ENCODE measurements at regions of chr14 and their contacts with region 1.

Region 1: GRCh38 chr14:76710056-76711010 is 50.9 kb upstream of the VASH1 start:
- DNase-seq: peak in 1 of 2 donors; percentile 54
- ATAC-seq: peak in 7 of 8 donors; percentile 43 to 69 (median 52)
- H3K4me3 ChIP-seq: no peak overlapping the region
- H3K27ac ChIP-seq: peak overlapping the region in 2 of 10 donors; percentile 15 to 20
- H3K4me1 ChIP-seq: peaks cover 0 to 26% (median 19%) of the 10 kb centered on the region in 9 donors
- H3K27me3 ChIP-seq: no peaks in the 10 kb centered on the region
- CTCF ChIP-seq: peak; percentile 70 to 83 (median 79)

Region 2: DNA sequence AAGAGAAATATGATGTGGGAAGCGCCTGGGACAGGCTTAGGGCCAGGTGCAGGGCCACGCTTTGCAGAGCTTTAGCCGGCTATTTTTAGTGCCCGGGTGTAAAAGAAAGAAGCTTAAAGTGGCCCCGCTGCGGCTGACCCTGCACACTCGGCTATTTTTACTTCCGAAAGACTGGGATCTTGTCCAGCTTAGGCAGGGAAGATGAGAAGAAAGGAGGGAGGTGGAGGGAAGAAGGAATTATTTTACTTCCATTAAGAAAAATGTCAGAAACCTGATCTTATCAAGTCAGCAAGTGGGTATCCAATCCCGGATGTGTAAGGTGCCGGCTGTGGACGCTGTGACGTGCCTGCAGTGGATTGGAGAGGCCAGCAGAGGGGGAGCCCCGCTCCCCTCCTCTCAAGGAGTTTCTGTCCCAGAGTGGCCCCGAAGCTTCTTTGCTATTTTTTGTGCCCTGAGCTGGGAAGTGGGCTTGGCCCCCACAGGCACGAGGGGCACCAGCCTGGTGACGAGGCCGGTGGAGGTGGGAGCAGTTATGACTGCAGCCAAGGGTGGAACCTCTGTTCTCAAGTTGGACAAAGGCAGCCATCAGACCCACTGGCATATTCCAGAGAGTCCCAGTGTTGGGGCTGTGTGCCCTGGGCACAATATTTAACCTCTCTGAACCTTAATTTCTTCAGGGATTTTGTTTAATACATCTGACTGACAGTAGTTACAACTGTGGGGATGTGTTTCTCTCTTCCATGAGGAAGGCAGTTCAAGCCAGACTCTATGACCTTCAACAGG is 236.7 kb before region 1 on chr14:
- intact Hi-C with region 1: no loop called
- DNase-seq: peak; percentile 47 to 55
- ATAC-seq: peak; percentile 81 to 98 (median 92)
- H3K4me3 ChIP-seq: peak overlapping the region in 8 of 10 donors; percentile 14 to 49 (median 38)
- H3K27ac ChIP-seq: peak overlapping the region in 7 of 10 donors; percentile 14 to 75 (median 55)
- H3K4me1 ChIP-seq: peaks cover 0 to 24% (median 16%) of the 10 kb centered on the region in 9 donors
- H3K27me3 ChIP-seq: no peaks in the 10 kb centered on the region
- CTCF ChIP-seq: peak in 8 of 9 donors; percentile 11 to 50 (median 25)

Region 3: DNA sequence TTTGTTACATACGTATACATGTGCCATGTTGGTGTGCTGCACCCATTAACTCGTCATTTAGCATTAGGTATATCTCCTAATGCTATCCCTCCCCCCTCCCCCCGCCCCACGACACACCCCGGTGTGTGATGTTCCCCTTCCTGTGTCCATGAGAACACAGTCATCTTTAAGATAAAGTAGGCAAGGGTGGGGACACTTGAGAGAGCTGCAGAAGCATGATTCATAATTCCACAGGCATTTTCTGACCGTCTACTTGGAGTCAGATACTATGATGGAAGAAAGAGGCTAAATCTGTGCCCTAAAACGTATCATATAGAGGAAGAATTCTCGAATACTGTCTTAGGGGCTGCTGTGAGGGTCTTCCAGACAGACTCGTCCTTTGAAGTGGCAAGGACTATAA is 95.0 kb before region 1 on chr14:
- intact Hi-C with region 1: no loop called
- DNase-seq: no peak
- ATAC-seq: no peak
- H3K4me3 ChIP-seq: no peak overlapping the region
- H3K27ac ChIP-seq: no peak overlapping the region
- H3K4me1 ChIP-seq: no peaks in the 10 kb centered on the region
- H3K27me3 ChIP-seq: peaks cover 0 to 11% (median 0%) of the 10 kb centered on the region in 7 donors
- CTCF ChIP-seq: no peak

Region 4: DNA sequence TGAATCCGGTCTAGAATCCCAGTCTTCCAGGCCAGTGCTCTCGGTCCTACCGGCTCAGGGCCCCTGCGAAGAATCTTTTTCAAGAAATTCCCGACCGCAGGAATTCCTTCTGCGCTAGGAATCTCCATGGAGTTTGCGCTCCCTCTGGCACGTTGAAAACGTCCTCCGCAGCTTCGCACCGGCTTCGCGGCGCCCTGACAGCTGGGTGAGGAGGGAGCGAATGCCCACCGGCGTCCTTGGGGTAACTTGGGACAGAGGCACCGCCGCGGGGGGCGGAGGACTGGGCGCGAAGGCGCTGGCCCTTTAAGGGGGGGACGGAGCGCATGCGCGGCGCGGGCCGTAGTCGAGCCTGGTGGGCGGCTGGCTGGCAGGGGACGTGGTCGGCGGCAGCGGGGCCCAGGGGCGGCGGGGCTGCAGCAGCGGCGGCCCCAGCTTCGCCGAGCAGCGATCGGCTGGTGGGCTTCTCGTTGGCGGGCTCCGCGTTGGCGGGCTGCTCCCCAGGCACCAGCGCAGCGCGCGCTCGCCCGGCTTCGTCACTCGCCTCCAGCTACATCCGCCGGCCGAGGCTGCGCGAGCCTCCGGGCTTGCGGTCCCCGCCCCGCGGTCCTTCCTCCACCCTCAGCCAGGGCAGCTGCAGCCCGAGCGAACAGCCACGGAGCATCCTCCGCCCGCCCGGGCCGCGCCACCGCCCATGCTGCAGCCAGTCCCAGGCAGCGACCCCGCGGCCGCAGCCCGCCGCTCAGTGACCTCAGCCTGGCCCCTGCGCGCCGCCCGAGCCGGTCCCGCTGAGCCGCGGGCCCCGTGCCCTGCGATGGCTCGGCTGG is 51.0 kb after region 1 on chr14 and contains the start of gene VASH1:
- intact Hi-C with region 1: loop called in 5 of 10 experiments (anchors 5 kb)
- DNase-seq: peak; percentile 74 to 85
- ATAC-seq: peak; percentile 71 to 90 (median 77)
- H3K4me3 ChIP-seq: peak within 1 kb of the TSS; percentile 69 to 93 (median 87)
- H3K27ac ChIP-seq: peak within 1 kb of the TSS; percentile 68 to 97 (median 93)
- H3K4me1 ChIP-seq: peaks cover 7 to 56% (median 44%) of the 10 kb centered on the region in 9 donors
- H3K27me3 ChIP-seq: peaks cover 0 to 21% (median 0%) of the 10 kb centered on the region in 7 donors
- CTCF ChIP-seq: no peak
- total RNA-seq, gene VASH1: 9.1 to 20.2 (median 12.9) TPM

Region 5: GRCh38 chr14:76784266-76785264 is 74.2 kb after region 1 on chr14:
- intact Hi-C with region 1: loop called (anchors 1 to 5 kb)
- DNase-seq: peak; percentile 82 to 91
- ATAC-seq: peak; percentile 83 to 92 (median 91)
- H3K4me3 ChIP-seq: no peak overlapping the region
- H3K27ac ChIP-seq: peak overlapping the region in 7 of 10 donors; percentile 21 to 80 (median 46)
- H3K4me1 ChIP-seq: peaks cover 15 to 71% (median 54%) of the 10 kb centered on the region in 9 donors
- H3K27me3 ChIP-seq: no peaks in the 10 kb centered on the region
- CTCF ChIP-seq: peak; percentile 76 to 99 (median 94)

Region 6: DNA sequence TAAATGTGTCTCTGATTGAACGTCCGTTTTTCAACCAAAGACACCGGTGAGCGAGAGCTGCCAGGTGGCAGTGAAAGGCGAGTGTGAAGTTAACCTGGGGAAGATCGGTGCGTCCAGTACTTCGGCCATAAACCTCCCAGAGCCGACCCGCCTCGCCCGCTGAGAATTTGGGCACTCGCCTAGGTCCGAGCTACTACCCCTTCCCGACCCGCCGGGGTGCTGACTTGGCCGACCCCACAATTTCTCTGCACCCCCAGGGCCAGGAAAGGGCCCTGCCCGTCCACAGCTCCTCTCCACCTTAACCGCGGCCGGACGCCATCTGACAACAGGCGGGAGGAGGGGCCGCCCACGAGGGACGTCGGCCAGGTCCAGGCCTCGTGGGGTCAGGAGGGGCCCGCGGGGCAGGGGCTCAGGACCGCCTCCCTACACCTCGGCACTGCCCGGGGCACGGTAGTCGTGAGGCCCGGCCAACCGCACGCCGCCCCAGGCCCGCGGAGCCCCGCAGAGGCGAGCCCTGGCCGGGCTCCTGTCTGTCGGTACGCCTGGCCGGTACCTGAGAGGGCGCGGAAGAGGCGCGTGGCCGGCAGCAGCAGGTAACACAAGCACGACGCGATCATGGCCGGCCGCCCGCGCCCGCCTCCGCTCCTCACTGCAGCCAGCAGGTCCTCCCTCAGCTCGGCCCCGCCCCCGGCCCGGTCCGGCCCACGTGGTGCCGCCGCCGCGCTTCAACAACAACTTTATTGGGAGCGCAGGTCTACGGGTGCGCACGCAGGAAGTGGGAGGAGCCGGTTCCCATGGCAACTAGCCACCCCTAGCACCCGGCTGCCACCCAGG is 102.1 kb after region 1 on chr14 and contains the start of gene ANGEL1:
- intact Hi-C with region 1: loop called in 3 of 10 experiments (anchors 2 to 5 kb)
- DNase-seq: peak; percentile 96 to 97
- ATAC-seq: peak; percentile 93 to 96 (median 95)
- H3K4me3 ChIP-seq: peak within 1 kb of the TSS; percentile 82 to 98 (median 90)
- H3K27ac ChIP-seq: peak within 1 kb of the TSS; percentile 71 to 97 (median 92)
- H3K4me1 ChIP-seq: peaks cover 0 to 33% (median 25%) of the 10 kb centered on the region in 9 donors
- H3K27me3 ChIP-seq: no peaks in the 10 kb centered on the region
- CTCF ChIP-seq: no peak
- total RNA-seq, gene ANGEL1: 9.2 to 17.1 (median 12.9) TPM

Region 7: GRCh38 chr14:76876076-76876475 is 165.7 kb after region 1 on chr14:
- intact Hi-C with region 1: loop called in 1 of 10 experiments (anchors 10 kb)
- DNase-seq: peak; percentile 48 to 51
- ATAC-seq: peak; percentile 71 to 92 (median 88)
- H3K4me3 ChIP-seq: no peak overlapping the region
- H3K27ac ChIP-seq: no peak overlapping the region
- H3K4me1 ChIP-seq: no peaks in the 10 kb centered on the region
- H3K27me3 ChIP-seq: no peaks in the 10 kb centered on the region
- CTCF ChIP-seq: peak; percentile 79 to 97 (median 93)

Region 8: DNA sequence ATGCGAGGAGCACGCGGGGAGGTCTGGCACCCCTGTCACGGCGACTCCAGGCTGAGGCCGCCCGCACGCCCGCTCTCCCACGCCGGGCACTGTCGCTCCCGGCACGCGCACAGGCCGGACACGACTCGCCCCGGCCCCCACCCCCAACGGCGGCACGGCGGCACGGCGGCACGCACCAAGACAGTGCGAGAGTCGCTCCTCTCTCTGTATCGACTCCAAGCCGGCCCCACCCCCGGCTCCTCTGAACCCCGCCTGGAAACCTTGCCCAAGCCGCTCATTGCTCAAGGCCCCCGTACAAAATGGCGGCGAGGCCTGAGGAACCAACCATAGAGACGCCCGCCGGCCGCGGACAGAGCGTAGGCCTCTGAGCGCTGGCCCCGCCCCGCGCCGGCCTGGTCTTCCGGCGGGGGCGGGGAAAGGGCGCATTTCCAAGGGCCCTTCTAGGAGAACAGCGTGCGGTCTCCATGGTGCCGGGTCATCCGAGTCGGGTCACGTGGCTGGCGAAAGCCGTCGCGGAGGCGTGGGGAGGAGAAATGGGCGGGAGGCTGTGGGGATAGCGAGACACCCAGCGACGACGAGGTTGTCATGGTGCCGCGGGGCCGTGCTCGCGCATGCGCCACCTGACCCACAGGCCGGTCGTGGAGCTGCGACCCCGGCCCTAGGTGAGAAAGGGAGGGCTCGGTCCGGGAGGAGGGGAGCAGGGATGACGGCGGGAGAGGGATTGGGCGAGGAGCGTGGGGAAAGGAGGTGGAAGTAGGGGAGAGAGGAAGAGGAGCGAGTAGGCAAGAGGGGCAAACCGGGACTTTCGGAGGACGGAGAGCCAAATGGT is 387.6 kb after region 1 on chr14 and contains the start of gene CIPC:
- intact Hi-C with region 1: loop called in 1 of 10 experiments (anchors 10 kb)
- DNase-seq: peak; percentile 99 to 100
- ATAC-seq: peak; percentile 94 to 98 (median 96)
- H3K4me3 ChIP-seq: peak within 1 kb of the TSS; percentile 53 to 86 (median 73)
- H3K27ac ChIP-seq: peak within 1 kb of the TSS; percentile 94 to 99 (median 98)
- H3K4me1 ChIP-seq: peaks cover 0 to 62% (median 49%) of the 10 kb centered on the region in 9 donors
- H3K27me3 ChIP-seq: no peaks in the 10 kb centered on the region
- CTCF ChIP-seq: no peak
- total RNA-seq, gene CIPC: 51.4 to 93.8 (median 64.2) TPM

Measured in heart right ventricle (tissue), 16 donors.